MCF 10A (cell line): ENCODE measurements at regions of chr2 and their contacts with region 1.

Region 1: DNA sequence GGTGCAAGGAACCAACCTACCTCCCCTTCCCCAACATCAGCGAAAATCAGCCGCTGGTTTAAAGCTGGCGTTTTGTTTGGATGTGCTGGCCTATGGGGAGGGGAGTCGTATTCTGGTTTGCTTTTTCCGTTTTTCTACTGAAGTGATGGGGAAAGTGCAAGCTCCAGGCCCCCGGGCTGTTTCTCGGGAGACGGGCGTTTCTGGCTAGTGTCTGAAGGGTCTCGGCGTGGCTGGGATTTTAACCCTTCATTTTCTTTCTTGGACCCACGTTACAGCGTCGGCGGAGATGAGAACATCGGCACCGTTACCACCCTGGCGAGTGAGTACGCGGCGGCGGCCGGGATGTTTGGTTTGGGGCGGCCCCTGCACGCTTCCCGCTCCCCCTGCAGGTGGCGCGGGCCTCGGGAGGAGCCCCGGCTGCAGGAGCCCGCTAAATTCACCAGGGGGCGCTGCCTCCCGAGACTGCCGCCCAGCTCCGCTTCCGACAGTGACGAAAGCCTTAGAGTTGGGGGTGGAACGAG is 70.7 kb downstream of the PLB1 start:
- DNase-seq: peak; percentile 83
- H3K4me3 Mint-ChIP-seq: peak overlapping the region; percentile 78
- H3K27ac Mint-ChIP-seq: no peak overlapping the region
- H3K4me1 Mint-ChIP-seq: peaks cover 18% of the 10 kb centered on the region
- H3K27me3 Mint-ChIP-seq: no peaks in the 10 kb centered on the region
- CTCF ChIP-seq: peak; percentile 99

Region 2: GRCh38 chr2:28577791-28578680 is 11.5 kb after region 1 on chr2:
- CTCF ChIA-PET with region 1: interaction called, 8 read pairs
- POLR2A ChIA-PET with region 1: interaction called, 66 read pairs
- intact Hi-C with region 1: no loop called
- DNase-seq: no peak
- H3K4me3 Mint-ChIP-seq: no peak overlapping the region
- H3K27ac Mint-ChIP-seq: no peak overlapping the region
- H3K4me1 Mint-ChIP-seq: peaks cover 12% of the 10 kb centered on the region
- H3K27me3 Mint-ChIP-seq: no peaks in the 10 kb centered on the region
- CTCF ChIP-seq: no peak

Region 3: DNA sequence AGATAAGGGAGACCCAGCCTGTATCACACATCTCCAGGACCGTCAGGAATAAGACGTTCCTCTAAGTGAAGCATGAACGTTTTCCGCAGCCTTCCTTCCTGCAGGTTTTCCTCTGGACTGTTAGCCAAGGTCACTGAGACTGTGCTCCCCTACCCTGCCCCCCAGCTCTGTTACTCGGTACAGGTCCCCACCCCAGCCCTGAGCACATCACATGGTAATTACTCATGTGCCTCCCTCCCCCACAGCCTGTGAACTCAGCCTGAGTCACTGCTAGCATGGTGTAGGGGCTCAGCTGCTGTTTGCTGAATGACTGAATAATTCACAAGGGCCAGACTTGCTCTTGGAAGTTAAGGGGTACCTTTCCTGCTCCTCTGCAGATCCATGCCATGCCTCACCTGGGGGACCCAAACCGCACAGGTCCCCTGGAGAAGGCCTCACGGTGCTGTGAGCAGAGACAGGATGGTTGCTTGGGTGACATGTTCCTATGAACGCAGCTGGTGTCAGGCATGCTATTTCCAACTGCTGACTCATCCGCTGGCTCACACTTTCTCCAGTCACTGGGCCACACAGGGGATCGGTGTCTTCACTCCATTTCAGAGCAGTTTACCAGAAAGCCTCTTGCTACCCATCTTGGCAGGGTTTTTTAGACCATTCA is 17.4 kb after region 1 on chr2:
- CTCF ChIA-PET with region 1: interaction called, 17 read pairs
- POLR2A ChIA-PET with region 1: interaction called, 66 read pairs
- intact Hi-C with region 1: loop called (anchors 2 kb)
- DNase-seq: peak; percentile 95
- H3K4me3 Mint-ChIP-seq: peak overlapping the region; percentile 61
- H3K27ac Mint-ChIP-seq: peak overlapping the region; percentile 84
- H3K4me1 Mint-ChIP-seq: peaks cover 34% of the 10 kb centered on the region
- H3K27me3 Mint-ChIP-seq: no peaks in the 10 kb centered on the region
- CTCF ChIP-seq: no peak

Region 4: GRCh38 chr2:28661589-28662001 is 95.0 kb after region 1 on chr2:
- CTCF ChIA-PET with region 1: interaction called, 3 read pairs
- POLR2A ChIA-PET with region 1: interaction called, 6 read pairs
- intact Hi-C with region 1: loop called (anchors 2 kb)
- DNase-seq: peak; percentile 88
- H3K4me3 Mint-ChIP-seq: no peak overlapping the region
- H3K27ac Mint-ChIP-seq: peak overlapping the region; percentile 78
- H3K4me1 Mint-ChIP-seq: peaks cover 44% of the 10 kb centered on the region
- H3K27me3 Mint-ChIP-seq: no peaks in the 10 kb centered on the region
- CTCF ChIP-seq: no peak